CD14-positive monocyte (primary cell): ENCODE measurements at regions of chr13 and their contacts with region 1.

Region 1: GRCh38 chr13:37074703-37075102 is 15.2 kb upstream of the SUPT20H start:
- DNase-seq: peak in 1 of 3 donors; percentile 47
- H3K4me3 ChIP-seq: no peak overlapping the region
- H3K4me3 Mint-ChIP-seq: no peak overlapping the region
- H3K27ac ChIP-seq: no peak overlapping the region
- H3K27ac Mint-ChIP-seq: no peak overlapping the region
- H3K4me1 ChIP-seq: no peaks in the 10 kb centered on the region
- H3K4me1 Mint-ChIP-seq: peaks cover 3% of the 10 kb centered on the region
- H3K27me3 ChIP-seq: no peaks in the 10 kb centered on the region
- H3K27me3 Mint-ChIP-seq: peaks cover 1 to 4% (median 2%) of the 10 kb centered on the region in 3 donors
- CTCF ChIP-seq: peak; percentile 67

Region 2: GRCh38 chr13:37163641-37164265 is 89.0 kb after region 1 on chr13:
- intact Hi-C with region 1: no loop called
- DNase-seq: no peak
- H3K4me3 ChIP-seq: no peak overlapping the region
- H3K4me3 Mint-ChIP-seq: no peak overlapping the region
- H3K27ac ChIP-seq: no peak overlapping the region
- H3K27ac Mint-ChIP-seq: no peak overlapping the region
- H3K4me1 ChIP-seq: no peaks in the 10 kb centered on the region
- H3K4me1 Mint-ChIP-seq: no peaks in the 10 kb centered on the region
- H3K27me3 ChIP-seq: no peaks in the 10 kb centered on the region
- H3K27me3 Mint-ChIP-seq: peaks cover 0 to 2% (median 0%) of the 10 kb centered on the region in 3 donors
- CTCF ChIP-seq: no peak

Region 3: GRCh38 chr13:38582133-38582532 is 1507.4 kb after region 1 on chr13:
- intact Hi-C with region 1: loop called in 1 of 2 experiments (anchors 5 kb)
- DNase-seq: no peak
- H3K4me3 ChIP-seq: no peak overlapping the region
- H3K4me3 Mint-ChIP-seq: no peak overlapping the region
- H3K27ac ChIP-seq: no peak overlapping the region
- H3K27ac Mint-ChIP-seq: no peak overlapping the region
- H3K4me1 ChIP-seq: no peaks in the 10 kb centered on the region
- H3K4me1 Mint-ChIP-seq: no peaks in the 10 kb centered on the region
- H3K27me3 ChIP-seq: no peaks in the 10 kb centered on the region
- H3K27me3 Mint-ChIP-seq: peaks cover 0 to 1% (median 0%) of the 10 kb centered on the region in 3 donors
- CTCF ChIP-seq: no peak